Spleen (tissue), 13 donors: ENCODE measurements at regions of chr15 and their contacts with region 1.

Region 1: GRCh38 chr15:82540055-82540983 is at the start of gene RPS17:
- DNase-seq: peak; percentile 100
- H3K4me3 ChIP-seq: peak within 1 kb of the TSS; percentile 71 to 91 (median 85)
- H3K27ac ChIP-seq: peak within 1 kb of the TSS; percentile 83 to 96 (median 92)
- H3K4me1 ChIP-seq: peaks cover 22 to 50% (median 36%) of the 10 kb centered on the region in 6 donors
- H3K27me3 ChIP-seq: peaks cover 0 to 6% (median 0%) of the 10 kb centered on the region in 7 donors
- CTCF ChIP-seq: peak; percentile 97 to 100 (median 100)
- POLR2A ChIP-seq: peak; percentile 29 to 86 (median 40)
- total RNA-seq, gene RPS17: 1,089 to 1,741 (median 1,381) TPM

Region 2: DNA sequence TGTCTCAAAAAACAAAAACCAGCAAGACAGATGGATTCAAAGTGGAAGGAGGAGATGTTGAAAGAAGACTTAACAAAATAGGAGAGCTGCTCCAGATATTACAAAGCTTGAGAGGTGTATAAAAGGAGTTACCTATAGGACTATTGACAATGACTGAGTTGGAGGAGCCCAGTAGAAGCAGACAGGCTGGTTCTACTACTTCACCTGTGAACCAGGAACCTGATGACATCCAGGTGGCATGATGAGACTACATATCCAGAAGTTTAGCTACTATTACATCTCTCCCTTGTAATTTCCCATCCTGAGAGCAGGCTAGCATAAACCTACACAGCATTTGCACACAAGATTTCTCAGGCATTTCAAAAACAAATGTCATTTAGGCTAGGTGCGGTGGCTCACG is 57.5 kb after region 1 on chr15:
- intact Hi-C with region 1: no loop called
- DNase-seq: no peak
- H3K4me3 ChIP-seq: no peak overlapping the region
- H3K27ac ChIP-seq: no peak overlapping the region
- H3K4me1 ChIP-seq: no peaks in the 10 kb centered on the region
- H3K27me3 ChIP-seq: peaks cover 0 to 28% (median 0%) of the 10 kb centered on the region in 7 donors
- CTCF ChIP-seq: no peak
- POLR2A ChIP-seq: no peak

Region 3: GRCh38 chr15:82999905-83000671 is 459.8 kb after region 1 on chr15:
- intact Hi-C with region 1: loop called (anchors 5 kb)
- DNase-seq: no peak
- H3K4me3 ChIP-seq: peak overlapping the region in 3 of 8 donors; percentile 8 to 57 (median 29)
- H3K27ac ChIP-seq: peak overlapping the region in 7 of 8 donors; percentile 11 to 64 (median 60)
- H3K4me1 ChIP-seq: peaks cover 0 to 16% (median 11%) of the 10 kb centered on the region in 6 donors
- H3K27me3 ChIP-seq: no peaks in the 10 kb centered on the region
- CTCF ChIP-seq: peak in 7 of 11 experiments; percentile 18 to 61 (median 42)
- POLR2A ChIP-seq: no peak